Gastrocnemius medialis (tissue), 4 donors: ENCODE measurements at regions of chr11 and their contacts with region 1.

Region 1: DNA sequence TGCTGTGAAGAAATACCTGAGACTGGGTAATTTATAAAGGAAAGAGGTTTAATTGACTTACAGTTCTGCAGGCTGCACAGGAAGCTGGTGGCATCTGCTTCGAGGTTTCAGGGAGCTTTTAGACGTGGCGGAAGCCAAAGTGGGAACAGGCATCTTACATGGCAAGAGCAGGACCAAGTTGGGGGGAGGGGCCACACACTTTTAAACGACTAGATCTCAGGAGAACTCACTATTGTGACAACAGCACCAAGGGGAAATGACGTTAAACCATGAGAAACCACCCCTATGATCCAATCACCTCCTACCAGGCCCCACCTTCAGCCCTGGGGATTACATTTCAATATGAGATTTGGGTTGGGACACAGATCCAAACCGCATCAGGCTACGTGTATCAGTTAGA is 11.1 kb upstream of the SCGB1D4 start:
- DNase-seq: no peak
- ATAC-seq: no peak
- H3K4me3 ChIP-seq: no peak overlapping the region
- H3K27ac ChIP-seq: no peak overlapping the region
- H3K4me1 ChIP-seq: no peaks in the 10 kb centered on the region
- H3K27me3 ChIP-seq: peaks cover 0 to 13% (median 10%) of the 10 kb centered on the region in 3 donors
- CTCF ChIP-seq: no peak
- POLR2A ChIP-seq: no peak

Region 2: DNA sequence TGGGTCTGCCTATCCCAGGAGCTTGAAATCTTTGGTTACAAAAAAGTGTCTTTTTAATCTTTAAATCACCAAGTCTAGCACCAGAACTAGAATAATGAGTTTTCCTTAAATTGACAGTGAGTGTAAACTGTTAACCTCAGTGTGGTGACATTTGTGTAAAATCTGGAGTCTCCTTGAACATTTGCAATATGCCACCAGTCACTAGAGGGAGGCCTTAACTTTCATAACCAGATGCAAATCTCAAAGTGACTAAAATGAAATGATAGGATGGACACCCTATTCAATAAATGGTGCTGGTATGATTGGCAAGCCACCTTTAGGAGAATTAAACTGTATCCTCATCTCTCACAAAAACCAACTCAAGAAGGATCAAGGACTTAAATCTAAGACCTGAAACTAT is 76.3 kb before region 1 on chr11:
- in situ Hi-C with region 1: no loop called
- intact Hi-C with region 1: loop called (anchors 5 kb)
- DNase-seq: no peak
- ATAC-seq: no peak
- H3K4me3 ChIP-seq: no peak overlapping the region
- H3K27ac ChIP-seq: no peak overlapping the region
- H3K4me1 ChIP-seq: no peaks in the 10 kb centered on the region
- H3K27me3 ChIP-seq: peaks cover 0 to 5% (median 0%) of the 10 kb centered on the region in 3 donors
- CTCF ChIP-seq: peak in 1 of 5 experiments; percentile 12
- POLR2A ChIP-seq: no peak